ENCODE measurements at regions of chr19 and their contacts with region 1.

Region 1: GRCh38 chr19:18521885-18522624 is at the start of gene ELL:
- DNase-seq: peak; percentile 100
- ATAC-seq: peak; percentile 92 to 96 (median 95)
- H3K4me3 ChIP-seq: peak within 1 kb of the TSS; percentile 77 to 100 (median 96)
- H3K27ac ChIP-seq: peak within 1 kb of the TSS; percentile 64 to 99 (median 95)
- H3K4me1 ChIP-seq: peaks cover 0 to 33% (median 14%) of the 10 kb centered on the region in 12 donors
- H3K27me3 ChIP-seq: no peaks in the 10 kb centered on the region
- CTCF ChIP-seq: peak in 6 of 12 donors; percentile 4 to 57 (median 34)
- POLR2A ChIP-seq: peak; percentile 88 to 90
- total RNA-seq, gene ELL: 5.9 to 17.8 (median 9.1) TPM

Region 2: GRCh38 chr19:18364826-18365528 is 157.1 kb before region 1 on chr19:
- intact Hi-C with region 1: no loop called
- DNase-seq: peak in 4 of 5 donors; percentile 70 to 85 (median 82)
- ATAC-seq: peak; percentile 53 to 92 (median 72)
- H3K4me3 ChIP-seq: peak overlapping the region in 3 of 12 donors; percentile 2 to 28 (median 19)
- H3K27ac ChIP-seq: peak overlapping the region; percentile 43 to 90 (median 78)
- H3K4me1 ChIP-seq: peaks cover 0 to 33% (median 17%) of the 10 kb centered on the region in 12 donors
- H3K27me3 ChIP-seq: no peaks in the 10 kb centered on the region
- CTCF ChIP-seq: no peak
- POLR2A ChIP-seq: no peak

Region 3: DNA sequence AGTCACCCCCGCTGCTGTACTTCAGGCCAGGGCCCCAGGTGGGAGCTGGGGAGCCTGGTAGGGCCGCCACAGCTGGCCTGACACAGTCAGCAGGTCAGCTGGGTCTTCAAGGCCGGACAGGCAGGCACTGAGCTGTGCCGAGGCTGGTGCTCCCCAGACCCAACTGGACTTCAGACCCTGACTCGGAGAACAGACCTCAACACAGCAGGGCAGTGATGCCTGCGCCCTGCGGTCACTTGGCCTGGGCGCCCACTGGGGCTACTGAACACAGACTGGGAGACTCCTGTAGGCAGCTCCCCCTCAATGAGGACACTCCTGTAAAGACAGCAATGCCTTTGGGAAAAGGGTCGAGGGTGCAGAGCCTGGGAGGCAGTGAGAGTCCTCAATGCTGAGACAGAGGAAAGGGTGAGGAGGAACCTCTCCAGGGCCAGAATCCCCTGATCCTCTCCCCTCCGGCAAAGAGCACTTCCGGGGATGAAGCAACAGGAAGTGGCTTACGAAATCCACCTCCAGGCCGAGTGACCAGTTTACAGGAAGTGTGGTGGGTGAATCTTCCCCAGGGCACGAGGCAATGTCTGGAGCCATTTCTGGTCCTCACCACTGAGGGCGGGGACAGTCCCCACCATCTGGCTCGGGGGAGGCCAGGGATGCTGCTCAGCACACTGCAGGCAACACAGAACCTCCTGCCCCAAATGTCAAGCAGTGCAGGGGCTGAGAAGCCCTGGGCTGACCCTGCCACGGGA is 43.3 kb before region 1 on chr19:
- intact Hi-C with region 1: loop called in 3 of 10 experiments (anchors 5 kb)
- DNase-seq: peak; percentile 81 to 89 (median 87)
- ATAC-seq: peak; percentile 57 to 85 (median 79)
- H3K4me3 ChIP-seq: peak overlapping the region in 1 of 12 donors; percentile 21
- H3K27ac ChIP-seq: peak overlapping the region; percentile 35 to 98 (median 78)
- H3K4me1 ChIP-seq: peaks cover 12 to 93% (median 54%) of the 10 kb centered on the region in 12 donors
- H3K27me3 ChIP-seq: no peaks in the 10 kb centered on the region
- CTCF ChIP-seq: no peak
- POLR2A ChIP-seq: no peak

Region 4: GRCh38 chr19:18571564-18572300 is 49.7 kb after region 1 on chr19 and contains the start of gene UBA52:
- intact Hi-C with region 1: loop called in 1 of 10 experiments (anchors 5 kb)
- DNase-seq: peak; percentile 97 to 99 (median 98)
- ATAC-seq: peak; percentile 90 to 99 (median 96)
- H3K4me3 ChIP-seq: peak within 1 kb of the TSS; percentile 71 to 100 (median 88)
- H3K27ac ChIP-seq: peak within 1 kb of the TSS; percentile 73 to 97 (median 90)
- H3K4me1 ChIP-seq: peaks cover 8 to 23% (median 17%) of the 10 kb centered on the region in 12 donors
- H3K27me3 ChIP-seq: no peaks in the 10 kb centered on the region
- CTCF ChIP-seq: no peak
- POLR2A ChIP-seq: peak; percentile 35 to 86
- total RNA-seq, gene UBA52: 336 to 944 (median 761) TPM

Measured in heart left ventricle (tissue), 16 donors.